Sciatic nerve (tissue), 2 donors: ENCODE measurements at regions of chr5 and their contacts with region 1.

Region 1: GRCh38 chr5:61854531-61854930 is 451.5 kb upstream of the KIF2A start:
- DNase-seq: no peak
- ATAC-seq: no peak

Region 2: DNA sequence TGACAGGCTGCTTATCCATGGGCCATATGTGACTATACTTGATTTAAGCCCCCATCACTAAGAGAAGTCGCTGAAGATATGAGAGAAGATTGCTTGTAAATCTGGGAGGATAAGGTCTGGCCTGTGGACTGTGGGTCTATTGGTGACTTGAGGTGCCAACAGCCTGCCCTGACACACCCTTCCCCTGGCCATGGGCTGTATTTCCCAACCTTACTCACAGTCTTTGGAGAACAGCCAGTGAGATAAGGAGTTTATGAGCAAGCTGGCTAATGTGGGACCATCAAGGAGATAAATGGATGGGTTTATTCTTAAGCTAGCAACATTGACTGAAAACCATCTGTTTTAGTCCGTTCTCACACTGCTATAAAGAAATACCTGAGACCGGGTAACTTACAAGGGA is 291.1 kb before region 1 on chr5:
- intact Hi-C with region 1: no loop called
- DNase-seq: no peak
- ATAC-seq: no peak

Region 3: DNA sequence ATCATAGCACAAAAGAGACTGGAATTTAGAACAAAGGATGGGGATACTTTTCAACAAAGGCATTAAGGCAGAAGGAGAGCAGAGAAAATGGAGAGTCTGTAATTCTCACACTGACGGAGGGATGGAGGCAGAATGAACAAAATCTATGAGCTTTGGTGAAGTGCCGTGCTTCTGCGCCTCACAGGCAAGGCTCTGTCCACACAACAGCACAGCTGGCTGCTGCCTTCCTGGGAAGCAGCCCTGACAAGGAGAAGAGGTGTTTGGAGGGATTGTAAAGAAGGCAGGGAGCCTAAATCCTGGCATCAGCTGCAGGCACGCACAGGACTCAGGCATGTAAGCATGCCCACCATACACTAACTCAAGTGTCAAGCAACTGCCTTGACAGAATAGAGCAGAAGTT is 33.7 kb before region 1 on chr5:
- intact Hi-C with region 1: loop called (anchors 1 kb)
- DNase-seq: no peak
- ATAC-seq: no peak